Colonic mucosa (tissue), 4 donors: ENCODE measurements at regions of chr10 and their contacts with region 1.

Region 1: GRCh38 chr10:84264611-84265141 is 19.8 kb downstream of the RGR start:
- DNase-seq: peak; percentile 79
- H3K4me3 ChIP-seq: no peak overlapping the region
- H3K27ac ChIP-seq: no peak overlapping the region
- H3K4me1 ChIP-seq: no peaks in the 10 kb centered on the region
- H3K27me3 ChIP-seq: no peaks in the 10 kb centered on the region
- CTCF ChIP-seq: peak; percentile 93

Region 2: DNA sequence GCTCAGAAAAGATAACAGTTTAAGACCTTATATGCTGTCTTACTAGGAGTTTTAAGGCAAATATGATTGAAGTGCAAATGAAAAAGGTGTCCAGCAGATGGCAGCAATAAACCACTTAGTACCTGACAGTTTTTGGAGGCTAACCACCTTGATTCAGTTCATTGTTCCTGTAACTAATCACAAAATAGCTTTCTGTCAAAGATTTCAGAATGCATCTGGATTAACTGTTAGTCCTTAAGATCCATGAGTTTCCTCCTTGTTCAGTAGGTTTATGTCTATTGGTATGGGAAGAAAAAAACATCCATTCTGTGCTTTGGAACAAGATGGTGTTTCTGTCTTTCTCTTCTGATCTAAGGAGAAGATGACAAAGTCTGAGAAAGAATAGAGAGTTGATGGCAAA is 110.3 kb after region 1 on chr10:
- intact Hi-C with region 1: loop called (anchors 10 kb)
- DNase-seq: peak; percentile 57
- H3K4me3 ChIP-seq: no peak overlapping the region
- H3K27ac ChIP-seq: no peak overlapping the region
- H3K4me1 ChIP-seq: no peaks in the 10 kb centered on the region
- H3K27me3 ChIP-seq: no peaks in the 10 kb centered on the region
- CTCF ChIP-seq: peak; percentile 59

Region 3: DNA sequence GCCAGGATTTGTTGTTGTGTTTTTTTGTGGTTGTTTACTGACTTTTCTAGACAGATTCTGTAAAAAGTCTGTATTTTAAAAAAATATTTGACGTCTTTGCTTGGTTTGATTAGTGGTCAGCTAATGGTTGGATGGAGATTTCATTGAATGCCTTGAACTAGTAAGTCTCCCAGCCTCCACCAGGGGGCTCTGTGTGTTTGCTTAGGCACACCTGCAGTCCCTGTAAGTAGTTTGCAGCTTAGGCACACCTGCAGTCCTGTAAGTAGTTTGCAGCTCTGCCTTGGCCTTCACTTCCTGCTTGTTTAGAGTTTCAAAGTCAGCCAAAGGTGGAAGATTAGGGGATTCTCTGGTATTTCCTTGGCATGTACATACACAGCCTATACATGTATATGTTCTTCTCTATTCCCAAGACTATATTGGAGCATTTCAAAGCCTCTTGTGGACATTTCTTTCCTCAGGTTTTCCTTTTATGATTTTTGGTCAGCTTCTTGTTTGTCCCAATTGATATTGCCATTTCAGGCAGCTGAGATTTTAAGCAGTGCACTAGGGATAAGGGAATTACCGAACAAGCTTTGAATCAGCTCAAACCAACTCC is 165.3 kb after region 1 on chr10:
- intact Hi-C with region 1: loop called (anchors 5 kb)
- DNase-seq: peak; percentile 84
- H3K4me3 ChIP-seq: no peak overlapping the region
- H3K27ac ChIP-seq: no peak overlapping the region
- H3K4me1 ChIP-seq: peaks cover 9% of the 10 kb centered on the region
- H3K27me3 ChIP-seq: no peaks in the 10 kb centered on the region
- CTCF ChIP-seq: peak; percentile 77

Region 4: DNA sequence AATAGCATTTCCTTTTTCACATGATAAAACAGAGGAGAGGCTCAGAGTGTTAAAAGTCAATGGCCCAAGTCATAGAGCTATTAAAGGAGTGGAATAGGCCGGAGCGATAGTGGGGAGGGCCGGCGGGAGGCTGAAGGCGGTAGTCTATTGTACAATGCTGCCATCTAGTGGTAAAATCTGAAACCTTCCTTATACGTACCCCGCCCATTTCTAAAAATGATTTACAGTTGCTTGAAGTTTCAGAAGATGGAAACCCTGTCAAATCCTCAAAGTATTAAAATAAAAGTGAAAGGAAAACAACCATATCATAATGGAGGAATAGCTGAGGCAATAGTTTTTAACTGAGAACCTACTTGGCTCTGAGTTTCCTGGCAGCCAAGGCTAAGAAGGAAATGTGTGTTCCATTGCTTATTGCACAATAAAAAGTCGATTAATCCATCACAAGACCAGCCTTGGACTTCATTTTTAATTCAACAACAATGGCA is 272.8 kb after region 1 on chr10:
- intact Hi-C with region 1: loop called (anchors 2 kb)
- DNase-seq: peak; percentile 45
- H3K4me3 ChIP-seq: no peak overlapping the region
- H3K27ac ChIP-seq: no peak overlapping the region
- H3K4me1 ChIP-seq: peaks cover 5% of the 10 kb centered on the region
- H3K27me3 ChIP-seq: peaks cover 6% of the 10 kb centered on the region
- CTCF ChIP-seq: peak; percentile 65

Region 5: DNA sequence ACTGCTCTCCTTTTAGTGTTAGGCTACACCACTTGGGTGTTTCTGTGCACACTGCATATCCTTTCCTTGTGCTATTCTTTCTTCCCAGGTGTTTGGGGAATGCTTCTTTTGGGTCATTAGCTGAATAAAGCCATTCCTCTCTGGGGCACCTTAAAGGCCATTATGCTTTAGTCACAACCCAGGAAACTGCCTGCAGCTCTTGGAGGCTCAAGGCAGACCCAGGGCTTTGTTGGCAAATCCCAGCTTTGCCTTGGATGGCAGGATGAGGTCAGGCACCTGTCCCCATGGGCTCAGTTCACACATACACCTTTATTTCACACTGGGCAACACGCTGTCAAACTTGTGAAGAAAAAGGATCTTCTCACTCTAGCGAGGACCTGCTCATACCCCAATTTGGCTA is 524.4 kb after region 1 on chr10:
- intact Hi-C with region 1: no loop called
- DNase-seq: no peak
- H3K4me3 ChIP-seq: no peak overlapping the region
- H3K27ac ChIP-seq: no peak overlapping the region
- H3K4me1 ChIP-seq: no peaks in the 10 kb centered on the region
- H3K27me3 ChIP-seq: no peaks in the 10 kb centered on the region
- CTCF ChIP-seq: no peak